Breast epithelium (tissue), 4 donors: ENCODE measurements at regions of chr20 and their contacts with region 1.

Region 1: GRCh38 chr20:34547844-34548613 is 10.5 kb upstream of the MAP1LC3A start:
- DNase-seq: no peak
- H3K4me3 ChIP-seq: no peak overlapping the region
- H3K27ac ChIP-seq: no peak overlapping the region
- H3K4me1 ChIP-seq: no peaks in the 10 kb centered on the region
- H3K27me3 ChIP-seq: no peaks in the 10 kb centered on the region
- CTCF ChIP-seq: no peak
- POLR2A ChIP-seq: no peak

Region 2: DNA sequence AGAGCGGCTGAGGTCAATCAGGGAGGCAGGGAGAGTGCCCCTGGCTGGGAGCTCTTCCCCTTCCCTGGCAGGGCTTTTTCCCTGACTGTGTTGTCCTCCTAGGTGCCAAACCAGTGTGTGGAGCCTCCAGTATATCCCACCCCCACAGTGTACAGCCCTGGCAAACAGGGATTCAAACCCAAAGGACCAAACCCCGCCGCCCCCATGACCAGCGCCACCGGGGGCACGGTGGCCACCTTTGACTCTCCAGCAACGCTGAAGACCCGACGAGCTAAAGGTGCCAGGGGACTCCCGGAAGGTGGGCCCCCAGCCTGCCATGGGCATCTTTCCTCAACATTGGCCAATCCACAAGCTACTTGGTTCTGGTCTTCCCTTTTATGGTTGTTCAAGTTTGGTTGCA is 791.0 kb before region 1 on chr20:
- intact Hi-C with region 1: no loop called
- DNase-seq: no peak
- H3K4me3 ChIP-seq: no peak overlapping the region
- H3K27ac ChIP-seq: no peak overlapping the region
- H3K4me1 ChIP-seq: no peaks in the 10 kb centered on the region
- H3K27me3 ChIP-seq: no peaks in the 10 kb centered on the region
- CTCF ChIP-seq: no peak
- POLR2A ChIP-seq: no peak

Region 3: GRCh38 chr20:34564833-34565232 is 16.8 kb after region 1 on chr20:
- intact Hi-C with region 1: loop called (anchors 1 kb)
- DNase-seq: no peak
- H3K4me3 ChIP-seq: no peak overlapping the region
- H3K27ac ChIP-seq: no peak overlapping the region
- H3K4me1 ChIP-seq: no peaks in the 10 kb centered on the region
- H3K27me3 ChIP-seq: no peaks in the 10 kb centered on the region
- CTCF ChIP-seq: no peak
- POLR2A ChIP-seq: no peak